ENCODE measurements at regions of chr6 and their contacts with region 1.

Region 1: GRCh38 chr6:135114355-135115145 is 59.9 kb upstream of the HBS1L start:
- DNase-seq: peak; percentile 86
- H3K4me3 Mint-ChIP-seq: peak overlapping the region; percentile 44
- H3K27ac Mint-ChIP-seq: peak overlapping the region; percentile 96
- H3K4me1 Mint-ChIP-seq: peaks cover 65% of the 10 kb centered on the region
- H3K27me3 Mint-ChIP-seq: no peaks in the 10 kb centered on the region

Region 2: DNA sequence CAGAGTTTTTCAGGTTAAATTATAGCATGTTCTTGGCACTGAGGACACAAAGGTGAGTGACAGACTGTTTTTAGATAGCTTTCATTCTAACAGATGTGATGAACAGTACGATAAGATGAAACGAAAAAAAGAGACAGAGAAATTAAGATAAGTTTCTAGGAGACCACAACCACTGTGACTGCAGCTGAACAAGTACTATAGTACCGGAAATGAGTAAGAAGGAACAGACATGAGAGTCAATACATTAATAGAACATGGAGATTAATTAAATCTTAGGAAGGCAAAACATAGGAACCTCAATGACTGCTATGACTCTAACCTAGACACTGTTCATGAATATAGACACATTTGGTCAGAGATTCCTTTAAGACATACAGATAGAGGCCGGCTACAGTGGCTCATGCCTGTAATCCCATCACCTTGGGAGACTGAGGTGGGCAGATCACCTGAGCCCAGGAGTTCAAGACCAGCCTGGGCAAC is 100.2 kb before region 1 on chr6:
- CTCF ChIA-PET with region 1: no interaction called
- POLR2A ChIA-PET with region 1: interaction called, 5 read pairs
- intact Hi-C with region 1: loop called (anchors 1 kb)
- DNase-seq: peak; percentile 17
- H3K4me3 Mint-ChIP-seq: peak overlapping the region; percentile 32
- H3K27ac Mint-ChIP-seq: peak overlapping the region; percentile 70
- H3K4me1 Mint-ChIP-seq: peaks cover 48% of the 10 kb centered on the region
- H3K27me3 Mint-ChIP-seq: no peaks in the 10 kb centered on the region

Region 3: DNA sequence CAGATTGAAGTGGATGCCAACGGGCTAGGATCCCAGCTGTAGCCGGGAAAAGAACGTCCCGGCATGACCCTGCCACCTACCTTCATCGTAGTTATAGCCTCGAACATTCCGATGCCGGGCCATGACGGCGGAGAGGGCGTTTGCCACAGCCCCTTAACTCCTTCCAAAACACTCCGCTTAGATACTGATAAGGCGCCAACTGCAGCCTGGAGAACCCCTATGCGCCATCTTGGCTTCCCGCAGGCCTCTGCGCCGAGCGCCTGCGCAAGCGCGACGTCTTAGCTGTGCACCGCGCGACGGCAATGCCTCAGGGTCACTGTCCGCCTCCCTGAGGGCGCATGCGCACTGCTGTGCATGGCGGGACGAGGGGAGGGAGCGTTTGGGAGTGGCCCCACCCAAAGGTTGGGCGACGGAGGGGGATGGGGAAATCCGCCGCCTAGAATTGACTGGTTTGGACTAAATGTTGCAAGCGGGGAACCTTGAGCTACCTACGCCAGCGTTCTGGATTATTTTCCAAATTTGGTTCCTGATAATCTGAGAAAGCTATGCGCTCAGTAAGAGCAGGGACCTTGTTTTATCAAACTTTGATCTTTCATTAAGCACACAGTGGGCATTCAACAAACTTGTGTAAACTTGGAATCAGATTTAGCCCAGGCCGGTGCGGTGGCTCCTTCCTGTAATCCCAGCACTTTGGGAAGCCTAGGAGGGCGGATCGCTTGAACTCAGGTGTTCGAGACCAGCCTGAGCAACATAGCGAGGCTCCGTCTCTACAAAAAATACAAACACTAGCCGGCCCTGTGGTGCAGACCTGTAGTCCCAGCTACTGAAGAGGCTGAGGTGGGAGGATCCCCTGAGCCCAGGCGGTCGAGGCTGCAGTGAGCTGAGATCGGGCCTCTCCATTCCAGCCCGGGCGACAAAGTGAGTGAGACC is 59.7 kb before region 1 on chr6 and contains the start of gene HBS1L:
- CTCF ChIA-PET with region 1: no interaction called
- POLR2A ChIA-PET with region 1: interaction called, 3 read pairs
- intact Hi-C with region 1: loop called (anchors 1 kb)
- DNase-seq: peak; percentile 98
- H3K4me3 Mint-ChIP-seq: peak within 1 kb of the TSS; percentile 92
- H3K27ac Mint-ChIP-seq: peak within 1 kb of the TSS; percentile 96
- H3K4me1 Mint-ChIP-seq: peaks cover 34% of the 10 kb centered on the region
- H3K27me3 Mint-ChIP-seq: no peaks in the 10 kb centered on the region
- total RNA-seq, gene HBS1L: 117 to 123 TPM

Region 4: DNA sequence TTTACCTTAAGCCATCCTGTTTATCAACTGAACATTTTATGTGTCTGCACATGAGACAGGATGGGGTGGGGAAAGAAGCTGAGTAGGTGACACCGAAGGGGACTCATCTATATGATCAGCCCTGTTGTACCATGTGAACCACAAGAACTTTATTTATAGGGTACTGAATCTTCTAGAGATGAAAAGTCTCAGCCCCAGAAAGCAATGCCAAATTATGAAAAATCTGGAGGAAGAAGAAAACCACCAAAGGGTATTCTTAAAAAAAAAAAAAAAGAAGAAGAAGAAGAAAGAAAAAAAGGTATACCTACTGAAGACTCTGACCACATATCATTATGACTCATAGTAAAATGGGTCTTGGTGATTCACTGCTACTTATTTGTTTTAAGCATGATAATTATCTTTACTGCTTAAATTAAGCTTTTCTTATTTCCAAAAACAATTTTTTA is 20.1 kb before region 1 on chr6:
- CTCF ChIA-PET with region 1: interaction called, 9 read pairs
- POLR2A ChIA-PET with region 1: interaction called, 3 read pairs
- intact Hi-C with region 1: loop called (anchors 1 kb)
- DNase-seq: peak; percentile 50
- H3K4me3 Mint-ChIP-seq: no peak overlapping the region
- H3K27ac Mint-ChIP-seq: peak overlapping the region; percentile 76
- H3K4me1 Mint-ChIP-seq: peaks cover 49% of the 10 kb centered on the region
- H3K27me3 Mint-ChIP-seq: no peaks in the 10 kb centered on the region

Region 5: DNA sequence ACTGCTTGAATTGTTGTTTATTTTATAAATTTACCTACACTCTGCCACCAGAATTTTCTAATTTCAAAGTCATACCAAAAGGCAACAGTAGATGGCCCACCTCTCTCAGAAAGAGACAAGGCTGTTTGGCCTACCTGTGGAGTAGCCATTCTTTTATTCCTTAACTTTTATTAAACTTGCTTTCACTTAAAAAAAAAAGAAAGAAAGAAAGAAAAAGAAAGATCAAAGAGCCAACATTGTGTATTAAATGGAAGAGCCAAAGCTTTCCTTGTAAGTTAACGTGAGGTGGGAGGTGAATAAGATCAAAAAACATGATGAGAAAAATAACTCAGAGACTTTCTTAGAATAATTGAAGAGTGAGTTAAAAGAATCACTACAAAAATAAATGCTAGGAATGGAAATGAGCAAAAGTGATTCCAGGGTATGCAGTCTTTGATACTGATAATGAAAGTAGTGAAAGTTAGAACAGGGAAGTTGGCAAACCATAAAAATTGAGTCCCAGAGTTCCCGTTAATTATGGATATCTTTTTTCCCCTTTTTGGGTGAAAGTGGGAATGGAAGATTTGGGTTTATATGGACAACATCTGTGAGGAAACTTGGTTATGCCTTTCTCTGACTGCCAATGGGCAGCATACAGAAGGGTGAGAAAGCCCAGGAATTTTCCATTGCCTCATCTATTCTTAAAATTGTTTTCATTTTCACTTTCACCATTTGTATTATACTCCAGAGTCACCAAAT is 30.7 kb after region 1 on chr6:
- CTCF ChIA-PET with region 1: interaction called, 5 read pairs
- POLR2A ChIA-PET with region 1: interaction called, 5 read pairs
- intact Hi-C with region 1: loop called (anchors 1 kb)
- DNase-seq: no peak
- H3K4me3 Mint-ChIP-seq: no peak overlapping the region
- H3K27ac Mint-ChIP-seq: peak overlapping the region; percentile 39
- H3K4me1 Mint-ChIP-seq: peaks cover 53% of the 10 kb centered on the region
- H3K27me3 Mint-ChIP-seq: peaks cover 2% of the 10 kb centered on the region

Region 6: GRCh38 chr6:135170849-135171248 is 56.3 kb after region 1 on chr6:
- CTCF ChIA-PET with region 1: no interaction called
- POLR2A ChIA-PET with region 1: interaction called, 3 read pairs
- intact Hi-C with region 1: loop called (anchors 1 kb)
- DNase-seq: peak; percentile 63
- H3K4me3 Mint-ChIP-seq: peak overlapping the region; percentile 17
- H3K27ac Mint-ChIP-seq: peak overlapping the region; percentile 87
- H3K4me1 Mint-ChIP-seq: peaks cover 16% of the 10 kb centered on the region
- H3K27me3 Mint-ChIP-seq: no peaks in the 10 kb centered on the region

Measured in activated CD4-positive, alpha-beta memory T cell treated with anti-CD3 and anti-CD28 coated beads for 36 hours (primary cell).